ENCODE measurements at regions of chr12 and their contacts with region 1.

Region 1: GRCh38 chr12:30695199-30696103 is at the start of gene IPO8:
- H3K4me3 ChIP-seq: peak within 1 kb of the TSS; percentile 98
- H3K27ac ChIP-seq: peak within 1 kb of the TSS; percentile 80
- H3K4me1 ChIP-seq: peaks cover 2% of the 10 kb centered on the region; the same call in 1 of the 2 replicates
- CTCF ChIP-seq: peak; percentile 84

Region 2: GRCh38 chr12:30613119-30613830 is 82.2 kb before region 1 on chr12:
- CTCF ChIA-PET with region 1: no interaction called
- POLR2A ChIA-PET with region 1: no interaction called
- H3K4me3 ChIP-seq: no peak overlapping the region
- H3K27ac ChIP-seq: no peak overlapping the region
- H3K4me1 ChIP-seq: no peaks in the 10 kb centered on the region; the same call in 1 of the 2 replicates
- CTCF ChIP-seq: no peak

Region 3: DNA sequence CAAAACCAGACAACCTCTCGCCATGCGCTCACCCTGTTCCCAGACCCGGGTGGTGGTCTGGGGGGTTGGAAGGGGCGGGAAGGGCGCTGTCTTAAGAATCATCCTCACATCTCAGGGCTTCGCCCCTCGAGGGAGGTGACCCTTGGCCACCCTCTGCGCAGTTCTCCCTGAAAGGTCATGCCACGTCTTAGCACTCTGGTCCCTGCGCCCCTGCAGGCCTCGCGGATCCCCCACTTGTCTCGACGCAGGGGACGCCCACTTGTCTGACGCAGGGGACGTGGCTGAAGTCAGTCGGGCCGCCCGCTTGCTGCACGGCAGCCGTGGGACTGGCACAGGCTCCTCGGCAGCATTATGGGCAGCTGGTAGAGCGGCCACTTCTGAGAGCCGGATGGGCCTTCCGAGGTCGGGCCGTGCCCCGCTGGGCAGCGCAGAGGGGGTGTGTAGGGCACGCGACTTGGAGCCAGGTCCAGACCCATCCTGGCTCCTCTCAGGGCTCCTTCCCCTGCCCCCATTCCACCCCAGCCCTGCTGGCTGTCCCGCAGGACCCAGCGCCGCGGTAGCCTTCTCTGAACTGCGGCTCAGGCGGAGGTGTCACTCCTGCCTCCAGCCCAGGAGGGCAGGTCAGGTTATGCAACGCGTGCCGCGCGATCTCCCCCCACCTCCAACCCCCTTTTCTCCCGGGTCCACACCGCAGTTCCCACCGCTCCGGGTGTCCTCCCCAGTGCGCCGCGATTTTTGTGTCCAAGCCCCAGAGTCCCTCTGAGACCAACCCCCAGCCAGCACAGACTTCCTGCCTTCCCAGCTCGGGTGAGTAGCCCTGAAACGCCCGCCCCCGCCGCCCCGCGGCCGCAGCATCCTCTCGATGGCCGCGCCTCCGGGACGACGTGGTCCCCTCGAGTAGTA is 100.2 kb after region 1 on chr12:
- CTCF ChIA-PET with region 1: interaction called, 3 read pairs
- POLR2A ChIA-PET with region 1: interaction called, 16 read pairs
- H3K4me3 ChIP-seq: peak overlapping the region; percentile 58
- H3K27ac ChIP-seq: peak overlapping the region; percentile 83
- H3K4me1 ChIP-seq: peaks cover 4% of the 10 kb centered on the region; the same call in 1 of the 2 replicates
- CTCF ChIP-seq: peak; percentile 45

Region 4: DNA sequence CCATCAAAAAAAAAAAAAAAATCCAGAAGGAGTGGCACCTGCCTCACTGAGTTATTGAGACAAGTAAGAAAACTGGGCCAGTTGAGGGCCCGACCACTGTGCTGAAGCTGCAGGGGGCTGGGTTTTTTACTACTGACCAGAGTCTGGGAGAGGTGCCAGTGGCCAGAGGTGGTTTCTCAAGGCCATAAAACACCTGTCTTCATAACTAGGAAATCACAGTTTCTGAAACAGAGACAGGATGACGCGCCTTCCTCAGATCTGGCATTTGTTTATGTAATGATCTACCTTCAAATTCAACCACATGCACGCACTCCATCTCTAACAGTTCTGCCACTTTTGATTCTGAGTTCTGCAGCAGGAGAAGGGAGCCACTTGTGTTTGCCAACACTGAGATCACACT is 243.8 kb after region 1 on chr12:
- CTCF ChIA-PET with region 1: no interaction called
- POLR2A ChIA-PET with region 1: no interaction called
- H3K4me3 ChIP-seq: no peak overlapping the region
- H3K27ac ChIP-seq: no peak overlapping the region
- H3K4me1 ChIP-seq: no peaks in the 10 kb centered on the region
- CTCF ChIP-seq: no peak